ENCODE measurements at regions of chr14 and their contacts with region 1.

Region 1: DNA sequence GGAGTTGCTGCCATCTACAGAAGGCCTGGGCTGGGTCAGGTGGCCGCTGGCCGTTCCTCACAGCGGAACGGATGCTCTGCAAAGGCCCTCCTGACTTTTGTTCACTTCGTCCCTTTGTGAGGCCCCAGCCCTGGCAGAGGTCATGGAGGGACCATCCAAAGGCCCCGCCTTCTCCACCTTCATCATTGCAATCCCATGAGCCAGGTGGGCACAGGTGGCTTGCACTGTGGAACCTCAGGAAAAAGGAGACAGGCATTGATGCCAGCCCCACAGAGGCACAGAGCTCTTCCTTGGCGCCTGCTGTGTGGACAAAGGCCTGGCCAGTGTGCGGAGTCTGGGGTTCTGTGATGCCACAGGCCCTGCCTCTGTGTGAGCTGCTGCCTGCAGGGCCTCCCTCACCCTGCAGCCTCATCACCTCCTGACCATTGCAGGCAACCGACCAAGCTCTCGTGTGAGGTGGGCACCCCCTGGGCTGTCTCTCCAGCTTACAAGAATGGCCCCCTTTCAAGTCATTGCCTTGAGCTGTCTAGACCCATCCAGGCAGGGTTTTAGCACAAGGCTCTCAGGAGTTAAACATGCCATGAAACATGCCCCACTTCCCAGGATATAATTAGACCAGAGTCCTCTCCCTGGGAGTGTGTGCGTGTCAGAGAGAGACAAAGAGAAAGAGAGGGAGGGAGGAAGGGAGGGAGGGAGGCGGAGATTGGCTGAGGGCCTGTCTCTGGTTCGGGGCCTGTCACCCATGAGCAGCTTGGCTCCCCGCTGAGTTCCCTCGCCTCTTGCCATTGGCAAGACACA is 19.3 kb downstream of the NFKBIA start:
- DNase-seq: peak; percentile 82 to 88 (median 88)
- H3K4me3 ChIP-seq: no peak overlapping the region
- H3K27ac ChIP-seq: peak overlapping the region; percentile 67 to 90
- H3K4me1 ChIP-seq: peaks cover 21% of the 10 kb centered on the region
- H3K27me3 ChIP-seq: no peaks in the 10 kb centered on the region
- CTCF ChIP-seq: no peak
- EP300 ChIP-seq: no peak
- POLR2A ChIP-seq: no peak

Region 2: DNA sequence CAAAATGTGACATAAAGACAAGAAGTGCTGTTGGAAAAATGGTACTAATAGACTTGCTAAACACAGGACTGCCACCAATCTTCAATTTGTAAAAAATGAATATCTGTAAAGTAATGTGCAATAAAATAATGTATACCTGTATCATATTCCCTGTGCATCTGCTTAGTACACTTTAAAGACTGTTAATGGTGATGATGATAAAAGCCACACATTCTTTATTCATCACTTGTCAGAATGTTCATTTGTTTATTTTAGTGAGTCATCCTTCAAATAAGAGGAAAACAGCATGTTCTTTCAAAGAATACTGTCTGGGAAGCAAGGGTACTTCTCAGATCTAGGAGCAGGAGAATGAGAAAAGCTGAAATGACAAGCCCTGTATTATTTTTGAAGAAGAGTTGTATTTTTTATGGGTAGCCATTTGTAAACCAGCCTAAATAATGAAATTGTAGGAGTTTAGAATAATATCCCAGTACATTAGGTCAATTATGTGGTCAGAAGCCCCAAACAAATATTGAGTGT is 171.3 kb before region 1 on chr14:
- intact Hi-C with region 1: no loop called
- DNase-seq: no peak
- H3K4me3 ChIP-seq: no peak overlapping the region
- H3K27ac ChIP-seq: peak overlapping the region in 1 of 2 donors; percentile 79
- H3K4me1 ChIP-seq: peaks cover 1% of the 10 kb centered on the region
- H3K27me3 ChIP-seq: no peaks in the 10 kb centered on the region
- CTCF ChIP-seq: no peak
- EP300 ChIP-seq: no peak
- POLR2A ChIP-seq: no peak

Region 3: DNA sequence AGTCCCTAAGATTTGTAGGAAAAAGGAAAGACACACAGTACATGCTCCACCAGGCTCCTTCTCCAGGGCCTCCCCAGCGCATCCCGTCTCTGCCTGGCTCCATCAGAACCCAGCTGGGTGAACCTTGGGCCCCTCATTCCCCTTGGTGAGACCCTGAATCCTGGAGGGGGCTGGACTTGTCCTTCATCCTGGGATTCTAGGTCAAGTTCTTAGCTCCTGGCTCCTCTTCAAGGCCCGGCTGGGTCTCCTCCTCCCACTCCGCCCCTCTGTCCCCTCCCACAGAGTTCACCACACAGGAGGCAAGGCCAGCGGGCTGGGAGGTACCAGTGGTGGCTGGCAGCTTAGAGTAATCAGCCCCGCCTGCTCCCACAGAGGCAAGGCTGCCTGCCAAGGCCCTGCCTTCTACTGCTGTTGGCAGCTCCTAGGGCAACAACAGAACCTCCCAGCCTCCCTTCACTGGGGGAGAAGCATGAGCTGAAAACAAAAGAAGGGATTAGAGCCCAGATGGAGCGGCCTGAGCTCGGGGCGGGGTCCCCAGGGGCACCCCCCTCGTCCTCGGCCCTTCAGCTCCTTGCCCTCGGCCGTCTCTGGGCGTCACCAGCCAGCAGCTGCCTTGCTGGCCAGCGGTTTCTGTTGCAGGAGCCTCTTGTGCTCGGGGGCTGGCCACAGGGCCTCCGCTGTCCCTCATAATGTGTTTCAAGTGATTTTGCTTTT is 43.6 kb before region 1 on chr14:
- intact Hi-C with region 1: loop called in 2 of 4 experiments (anchors 1 to 5 kb)
- DNase-seq: peak; percentile 91 to 96 (median 94)
- H3K4me3 ChIP-seq: peak overlapping the region; percentile 3
- H3K27ac ChIP-seq: peak overlapping the region; percentile 67 to 87
- H3K4me1 ChIP-seq: peaks cover 37% of the 10 kb centered on the region
- H3K27me3 ChIP-seq: no peaks in the 10 kb centered on the region
- CTCF ChIP-seq: no peak
- EP300 ChIP-seq: no peak
- POLR2A ChIP-seq: peak; percentile 6